ENCODE measurements at regions of chr11 and their contacts with region 1.

Region 1: DNA sequence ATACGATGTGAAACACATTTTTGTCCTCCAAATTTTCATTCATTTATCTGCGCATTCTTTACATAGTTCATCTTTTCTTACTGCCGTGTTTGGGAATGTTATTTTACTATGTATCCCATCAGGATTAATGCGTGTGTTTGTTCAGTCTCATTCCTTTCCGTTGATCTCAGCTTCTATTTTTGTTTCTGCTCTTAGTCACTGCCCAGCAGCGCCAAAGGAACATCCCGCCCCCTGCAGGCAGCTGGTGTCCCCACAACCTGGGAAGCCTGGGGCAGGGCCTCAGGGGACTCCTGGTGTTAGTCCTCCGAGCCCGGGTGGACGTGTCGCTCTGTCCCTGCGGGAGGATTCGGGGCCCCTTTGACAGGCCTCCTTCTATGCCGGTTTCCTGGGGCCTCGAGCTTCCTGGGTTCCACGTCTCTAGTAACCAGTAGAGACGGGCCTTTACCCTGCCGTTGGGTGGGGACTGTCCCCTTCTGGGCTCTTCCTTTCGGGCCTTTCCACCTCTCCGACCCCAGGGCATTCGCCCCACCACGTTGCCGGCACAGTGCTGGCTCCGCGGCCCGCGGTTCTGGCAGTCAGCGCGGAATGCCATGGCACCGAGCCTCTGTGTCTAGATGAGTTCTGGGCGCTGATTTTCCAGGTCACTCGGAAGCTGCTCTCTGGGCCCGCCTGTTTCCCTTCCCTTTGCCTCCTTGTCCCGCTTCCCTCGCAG is 39.8 kb downstream of the WEE1 start:
- DNase-seq: peak; percentile 97 to 99
- H3K4me3 ChIP-seq: peak overlapping the region; percentile 43
- H3K4me3 Mint-ChIP-seq: peak overlapping the region; percentile 93
- H3K27ac Mint-ChIP-seq: peak overlapping the region; percentile 98
- H3K4me1 ChIP-seq: peaks cover 33% of the 10 kb centered on the region
- H3K4me1 Mint-ChIP-seq: peaks cover 37% of the 10 kb centered on the region
- H3K27me3 ChIP-seq: no peaks in the 10 kb centered on the region
- H3K27me3 Mint-ChIP-seq: no peaks in the 10 kb centered on the region
- CTCF ChIP-seq: peak; percentile 86 to 98

Region 2: DNA sequence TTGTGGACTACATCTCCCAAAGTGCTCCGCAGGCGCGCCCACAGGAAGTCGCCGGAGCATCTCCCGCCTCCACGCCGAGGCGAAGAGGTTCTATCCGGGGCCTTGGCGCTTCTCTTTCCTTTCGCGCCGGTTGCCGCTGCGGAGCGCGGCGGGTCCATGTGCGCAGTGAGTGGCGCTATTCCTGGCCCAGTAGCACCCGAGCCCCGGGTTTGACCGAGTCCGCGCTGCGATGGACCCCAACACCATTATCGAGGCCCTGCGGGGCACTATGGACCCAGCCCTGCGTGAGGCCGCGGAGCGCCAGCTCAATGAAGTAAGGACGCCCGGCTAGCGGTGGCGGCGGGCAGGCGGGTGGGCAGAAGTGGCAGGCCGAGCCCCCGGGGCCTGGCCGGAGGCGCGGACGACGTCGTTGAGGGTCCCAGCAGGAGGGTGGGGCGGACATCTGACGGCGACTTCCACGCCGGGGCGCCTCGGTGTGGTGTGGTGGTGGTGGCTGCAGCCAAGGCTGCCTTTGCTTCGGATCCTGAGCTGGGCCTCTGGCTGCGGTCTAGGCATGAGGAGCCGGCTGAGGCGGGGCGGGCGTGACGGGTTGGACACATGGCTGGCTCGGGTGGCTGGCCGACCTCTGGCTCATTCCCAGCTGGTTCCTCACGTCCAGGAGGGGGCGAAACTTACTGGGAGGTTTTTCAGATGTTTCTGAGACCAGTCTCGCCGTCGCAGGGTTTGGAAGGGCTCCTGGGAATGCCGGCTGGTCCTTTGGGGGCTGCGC is 228.6 kb before region 1 on chr11 and contains the start of gene IPO7:
- CTCF ChIA-PET with region 1: interaction called, 5 read pairs
- POLR2A ChIA-PET with region 1: no interaction called
- intact Hi-C with region 1: loop called (anchors 10 kb)
- DNase-seq: peak; percentile 92 to 93
- H3K4me3 ChIP-seq: peak within 1 kb of the TSS; percentile 90
- H3K4me3 Mint-ChIP-seq: peak within 1 kb of the TSS; percentile 94
- H3K27ac Mint-ChIP-seq: peak within 1 kb of the TSS; percentile 98
- H3K4me1 ChIP-seq: peaks cover 30% of the 10 kb centered on the region
- H3K4me1 Mint-ChIP-seq: peaks cover 29% of the 10 kb centered on the region
- H3K27me3 ChIP-seq: no peaks in the 10 kb centered on the region
- H3K27me3 Mint-ChIP-seq: no peaks in the 10 kb centered on the region
- CTCF ChIP-seq: peak; percentile 20 to 44
- total RNA-seq, gene IPO7: 196 and 199 TPM in 2 replicates

Region 3: GRCh38 chr11:9534791-9535781 is 78.2 kb before region 1 on chr11:
- CTCF ChIA-PET with region 1: interaction called, 9 read pairs
- POLR2A ChIA-PET with region 1: interaction called, 3 read pairs
- intact Hi-C with region 1: loop called (anchors 2 kb)
- DNase-seq: peak; percentile 59 to 76
- H3K4me3 ChIP-seq: no peak overlapping the region
- H3K4me3 Mint-ChIP-seq: no peak overlapping the region
- H3K27ac Mint-ChIP-seq: peak overlapping the region; percentile 14
- H3K4me1 ChIP-seq: peaks cover 44% of the 10 kb centered on the region
- H3K4me1 Mint-ChIP-seq: peaks cover 20% of the 10 kb centered on the region
- H3K27me3 ChIP-seq: no peaks in the 10 kb centered on the region
- H3K27me3 Mint-ChIP-seq: no peaks in the 10 kb centered on the region
- CTCF ChIP-seq: peak; percentile 74 to 80

Region 4: DNA sequence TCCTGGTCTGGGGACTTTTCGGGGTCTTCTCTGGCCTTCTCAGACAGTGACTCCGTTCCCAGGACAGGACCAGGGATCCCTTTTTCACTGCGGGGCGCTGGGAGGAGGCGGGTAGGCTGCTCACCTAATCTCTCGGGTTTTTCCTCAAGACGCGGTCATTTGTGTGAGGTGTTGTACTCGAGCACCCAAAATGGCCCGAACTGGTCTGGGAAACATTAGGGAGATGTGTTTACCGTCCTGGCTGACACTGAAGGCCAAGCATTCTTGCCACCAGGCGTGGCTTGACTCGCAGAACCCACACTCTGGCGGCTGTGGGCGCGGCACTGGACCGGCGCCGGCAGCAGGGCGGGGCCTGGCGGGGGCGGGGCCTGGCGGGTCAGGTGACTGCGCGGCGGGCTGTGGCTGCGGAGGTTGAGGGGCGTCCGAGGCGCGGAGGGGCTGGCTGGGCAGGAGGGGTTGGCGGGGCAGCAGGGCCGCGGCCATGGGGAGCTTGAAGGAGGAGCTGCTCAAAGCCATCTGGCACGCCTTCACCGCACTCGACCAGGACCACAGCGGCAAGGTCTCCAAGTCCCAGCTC is 50.5 kb after region 1 on chr11 and contains the start of gene SWAP70:
- CTCF ChIA-PET with region 1: interaction called, 4 read pairs
- POLR2A ChIA-PET with region 1: interaction called, 5 read pairs
- intact Hi-C with region 1: loop called (anchors 1 kb)
- DNase-seq: peak; percentile 95 to 97
- H3K4me3 ChIP-seq: peak within 1 kb of the TSS; percentile 85
- H3K4me3 Mint-ChIP-seq: peak within 1 kb of the TSS; percentile 95
- H3K27ac Mint-ChIP-seq: peak within 1 kb of the TSS; percentile 99
- H3K4me1 ChIP-seq: no peaks in the 10 kb centered on the region
- H3K4me1 Mint-ChIP-seq: no peaks in the 10 kb centered on the region
- H3K27me3 ChIP-seq: no peaks in the 10 kb centered on the region
- H3K27me3 Mint-ChIP-seq: no peaks in the 10 kb centered on the region
- CTCF ChIP-seq: peak; percentile 26 to 61
- total RNA-seq, gene SWAP70: 37.0 and 42.4 TPM in 2 replicates

Region 5: GRCh38 chr11:9748361-9748970 is 135.2 kb after region 1 on chr11:
- CTCF ChIA-PET with region 1: interaction called, 17 read pairs
- POLR2A ChIA-PET with region 1: no interaction called
- intact Hi-C with region 1: loop called (anchors 1 kb)
- DNase-seq: peak; percentile 70 to 75
- H3K4me3 ChIP-seq: no peak overlapping the region
- H3K4me3 Mint-ChIP-seq: no peak overlapping the region
- H3K27ac Mint-ChIP-seq: no peak overlapping the region
- H3K4me1 ChIP-seq: no peaks in the 10 kb centered on the region
- H3K4me1 Mint-ChIP-seq: peaks cover 6% of the 10 kb centered on the region
- H3K27me3 ChIP-seq: no peaks in the 10 kb centered on the region
- H3K27me3 Mint-ChIP-seq: no peaks in the 10 kb centered on the region
- CTCF ChIP-seq: peak; percentile 49 to 74

Region 6: GRCh38 chr11:10328314-10329090 is 715.2 kb after region 1 on chr11:
- CTCF ChIA-PET with region 1: interaction called, 3 read pairs
- POLR2A ChIA-PET with region 1: no interaction called
- intact Hi-C with region 1: loop called (anchors 5 kb)
- DNase-seq: peak; percentile 66 to 73
- H3K4me3 ChIP-seq: no peak overlapping the region
- H3K4me3 Mint-ChIP-seq: peak overlapping the region; percentile 39
- H3K27ac Mint-ChIP-seq: peak overlapping the region; percentile 14
- H3K4me1 ChIP-seq: peaks cover 63% of the 10 kb centered on the region
- H3K4me1 Mint-ChIP-seq: peaks cover 36% of the 10 kb centered on the region
- H3K27me3 ChIP-seq: no peaks in the 10 kb centered on the region
- H3K27me3 Mint-ChIP-seq: no peaks in the 10 kb centered on the region
- CTCF ChIP-seq: no peak